ENCODE measurements at regions of chr15 and their contacts with region 1.

Region 1: GRCh38 chr15:65318870-65319356 is 14.4 kb downstream of the RNU5B-1 start:
- DNase-seq: peak; percentile 74 to 90 (median 86)
- ATAC-seq: peak; percentile 92 to 94
- H3K4me3 ChIP-seq: no peak overlapping the region
- H3K27ac ChIP-seq: no peak overlapping the region
- H3K4me1 ChIP-seq: no peaks in the 10 kb centered on the region
- H3K27me3 ChIP-seq: no peaks in the 10 kb centered on the region

Region 2: DNA sequence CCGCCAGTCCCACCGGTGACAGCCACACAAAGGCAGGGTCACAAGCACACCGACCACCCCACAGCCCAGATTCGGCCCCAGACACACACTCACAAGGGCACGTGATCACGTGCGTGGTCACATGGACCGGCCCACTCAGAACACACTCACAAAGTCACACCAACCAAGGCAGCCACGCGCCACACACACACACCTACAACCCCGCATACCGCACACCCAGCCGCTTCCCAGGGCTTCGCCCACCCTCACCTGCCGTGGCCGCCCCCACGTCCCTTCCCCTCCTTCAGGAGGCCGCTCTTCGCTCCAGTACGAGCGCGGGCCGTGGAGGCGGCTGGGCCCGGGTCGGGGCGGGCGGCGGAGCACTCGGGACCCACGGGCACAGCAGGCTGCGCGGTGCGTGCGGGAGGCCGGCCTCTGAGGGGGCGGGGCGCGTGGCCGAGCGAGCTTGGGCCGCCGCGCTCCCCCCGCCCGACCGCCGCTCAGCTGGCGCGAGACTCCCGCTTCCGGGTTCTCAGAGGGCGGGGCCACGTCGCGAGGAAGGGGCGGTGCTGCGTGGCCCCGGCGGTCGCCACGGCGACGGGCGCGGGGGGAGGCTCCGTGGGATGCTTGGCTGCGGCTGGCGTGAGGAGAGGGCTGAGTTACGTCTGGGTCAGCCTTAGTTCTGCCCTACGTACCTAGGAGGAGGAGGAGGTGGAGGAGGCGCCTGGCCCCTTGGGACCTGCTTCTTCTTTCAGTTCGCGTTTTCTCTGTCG is 329.3 kb before region 1 on chr15 and contains the start of gene SPG21:
- intact Hi-C with region 1: no loop called
- DNase-seq: peak; percentile 95 to 98 (median 97)
- ATAC-seq: peak; percentile 97 to 98
- H3K4me3 ChIP-seq: peak within 1 kb of the TSS; percentile 85
- H3K27ac ChIP-seq: peak within 1 kb of the TSS; percentile 84
- H3K4me1 ChIP-seq: no peaks in the 10 kb centered on the region
- H3K27me3 ChIP-seq: no peaks in the 10 kb centered on the region
- total RNA-seq, gene SPG21: 54.2 to 59.3 (median 56.0) TPM

Region 3: GRCh38 chr15:65089206-65089824 is 229.6 kb before region 1 on chr15:
- intact Hi-C with region 1: no loop called
- DNase-seq: peak; percentile 69 to 89 (median 87)
- ATAC-seq: peak; percentile 32 to 50
- H3K4me3 ChIP-seq: no peak overlapping the region
- H3K27ac ChIP-seq: peak overlapping the region; percentile 67
- H3K4me1 ChIP-seq: peaks cover 22% of the 10 kb centered on the region
- H3K27me3 ChIP-seq: no peaks in the 10 kb centered on the region

Region 4: DNA sequence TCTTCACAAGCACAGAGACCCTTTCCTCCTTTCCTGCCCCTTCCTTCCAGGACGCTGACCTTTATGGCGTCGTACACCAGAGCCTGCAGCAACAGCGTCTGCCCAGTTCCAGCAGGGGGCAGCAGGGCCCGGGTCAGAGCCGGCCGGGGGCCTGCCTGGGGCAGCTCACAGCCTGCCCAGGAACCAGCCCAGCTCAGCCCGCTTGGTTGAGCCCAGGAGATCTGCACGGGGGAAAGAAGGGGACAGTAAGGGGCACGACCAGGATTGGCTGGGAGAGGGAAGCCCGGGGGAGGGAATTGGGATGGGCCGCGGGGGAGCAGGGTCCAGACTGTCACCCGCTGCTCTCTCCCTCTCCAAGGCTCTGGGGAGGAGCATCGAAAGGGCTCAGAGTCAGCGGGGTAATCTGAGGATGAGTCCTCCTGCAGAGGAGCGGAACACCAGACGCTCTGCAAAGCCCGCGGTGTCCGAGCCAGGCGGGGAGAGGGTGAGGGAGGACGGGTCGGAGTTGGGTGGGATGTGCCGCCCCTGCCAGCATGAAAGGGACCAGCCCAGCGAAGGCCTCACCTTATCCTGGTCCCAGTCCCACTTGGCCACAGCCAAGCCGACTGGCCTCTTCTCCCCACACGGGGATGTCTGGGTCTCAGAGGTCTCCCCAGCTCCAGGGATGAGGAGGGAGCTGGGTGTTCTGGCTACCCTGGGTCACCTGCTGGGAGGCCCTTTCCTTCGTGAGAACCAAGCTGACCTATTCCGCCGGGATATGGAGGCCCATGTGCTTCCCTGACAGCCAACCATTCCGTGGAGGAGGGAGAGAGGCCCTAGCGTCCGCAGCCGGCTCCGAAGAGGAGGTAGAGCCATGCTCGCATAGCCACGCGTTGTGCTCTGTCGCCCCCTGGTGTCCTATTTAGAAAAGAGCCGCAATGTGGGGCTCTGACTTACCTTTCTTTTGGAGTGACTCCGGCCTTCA is 66.3 kb after region 1 on chr15:
- intact Hi-C with region 1: loop called (anchors 1 to 2 kb)
- DNase-seq: peak; percentile 84 to 93 (median 92)
- ATAC-seq: peak; percentile 92 to 95
- H3K4me3 ChIP-seq: peak overlapping the region; percentile 6
- H3K27ac ChIP-seq: no peak overlapping the region
- H3K4me1 ChIP-seq: no peaks in the 10 kb centered on the region
- H3K27me3 ChIP-seq: no peaks in the 10 kb centered on the region

Measured in right cardiac atrium (tissue), 5 donors.